ENCODE measurements at regions of chr6 and their contacts with region 1.

Region 1: DNA sequence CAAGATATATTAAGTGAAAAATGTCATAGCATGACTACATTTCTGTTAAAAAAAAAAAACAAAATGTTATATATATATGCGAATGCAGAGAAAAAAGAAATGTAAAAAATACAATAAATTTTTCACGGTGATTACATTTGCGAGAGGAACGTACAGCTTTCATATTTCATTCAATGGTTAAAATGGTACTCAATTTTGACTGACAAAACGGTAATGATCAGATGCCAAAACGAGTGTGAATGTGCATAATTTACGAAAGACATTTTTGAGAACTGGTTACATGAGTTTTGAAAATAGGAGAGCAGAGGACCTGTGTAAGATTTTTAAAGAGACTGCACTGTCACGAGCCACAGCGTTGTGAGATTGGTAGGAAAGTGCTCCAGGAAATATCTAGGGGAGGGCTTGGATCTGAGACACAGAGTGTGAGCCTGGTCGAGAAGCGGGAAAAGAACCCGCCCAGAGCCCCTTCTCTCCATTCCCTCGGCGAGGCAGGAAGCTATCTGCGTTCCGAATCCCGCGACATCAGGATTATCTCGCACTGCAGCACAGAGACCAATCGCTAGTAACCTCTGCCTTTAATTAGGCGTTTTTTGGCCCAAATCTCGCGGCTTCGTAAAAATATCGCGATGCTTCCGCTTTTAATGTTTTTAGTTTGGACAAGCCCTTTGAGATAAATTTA is 28.5 kb downstream of the TRIM27 start:
- DNase-seq: peak; percentile 98
- ATAC-seq: peak; percentile 62
- H3K4me3 ChIP-seq: peak overlapping the region; percentile 83
- H3K27ac ChIP-seq: peak overlapping the region; percentile 80
- H3K4me1 ChIP-seq: peaks cover 10% of the 10 kb centered on the region
- H3K27me3 ChIP-seq: no peaks in the 10 kb centered on the region
- CTCF ChIP-seq: no peak

Region 2: GRCh38 chr6:28863604-28864320 is 31.5 kb before region 1 on chr6:
- CTCF ChIA-PET with region 1: no interaction called
- POLR2A ChIA-PET with region 1: interaction called, 3 read pairs
- intact Hi-C with region 1: loop called (anchors 1 kb)
- DNase-seq: peak; percentile 91
- ATAC-seq: peak; percentile 61
- H3K4me3 ChIP-seq: peak overlapping the region; percentile 87
- H3K27ac ChIP-seq: peak overlapping the region; percentile 22; the same call in 1 of the 2 replicates
- H3K4me1 ChIP-seq: peaks cover 29% of the 10 kb centered on the region
- H3K27me3 ChIP-seq: no peaks in the 10 kb centered on the region
- CTCF ChIP-seq: no peak

Region 3: DNA sequence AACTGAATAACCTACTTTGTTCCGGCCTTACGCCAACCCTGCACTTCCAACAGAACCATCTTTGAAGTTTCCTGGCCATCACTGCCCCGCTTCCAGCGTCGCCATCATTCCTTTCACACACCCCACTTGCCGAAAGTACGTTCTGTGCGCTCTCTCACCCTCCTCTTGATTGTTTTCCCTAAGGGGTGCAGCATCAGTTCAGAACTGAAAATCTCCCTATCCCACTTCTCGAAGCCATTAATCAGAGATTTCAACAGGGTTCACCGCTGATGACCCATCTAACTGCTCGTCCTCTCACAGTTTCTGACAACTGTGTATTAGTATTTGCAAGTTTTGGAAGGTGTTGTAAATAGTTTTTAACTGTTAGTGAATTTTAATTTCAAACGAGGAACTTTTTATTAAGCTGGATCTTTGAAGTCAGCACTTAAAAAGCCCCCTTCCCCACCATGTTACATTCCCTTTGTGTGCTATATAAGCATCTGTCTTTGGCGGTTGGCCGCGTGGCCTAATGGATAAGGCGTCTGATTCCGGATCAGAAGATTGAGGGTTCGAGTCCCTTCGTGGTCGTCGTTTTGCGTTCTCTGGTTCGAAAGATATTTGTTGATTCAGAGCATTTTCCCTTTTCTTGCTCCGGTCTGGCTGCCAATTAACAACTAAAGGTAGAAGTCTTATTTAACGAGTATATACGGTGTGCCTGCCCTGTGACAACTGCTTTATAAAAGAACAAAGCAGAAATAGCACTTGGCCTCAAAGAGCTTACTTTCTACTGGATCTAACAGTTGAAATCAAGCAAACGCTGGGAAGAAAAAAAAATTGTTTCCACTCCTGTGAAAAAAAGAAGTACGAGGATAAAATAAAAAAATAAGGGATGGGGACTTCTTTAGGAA is 14.1 kb before region 1 on chr6:
- CTCF ChIA-PET with region 1: no interaction called
- POLR2A ChIA-PET with region 1: no interaction called
- intact Hi-C with region 1: loop called (anchors 2 kb)
- DNase-seq: peak; percentile 88
- ATAC-seq: peak; percentile 74
- H3K4me3 ChIP-seq: peak overlapping the region; percentile 81
- H3K27ac ChIP-seq: no peak overlapping the region
- H3K4me1 ChIP-seq: no peaks in the 10 kb centered on the region; the same call in 1 of the 2 replicates
- H3K27me3 ChIP-seq: no peaks in the 10 kb centered on the region
- CTCF ChIP-seq: no peak

Region 4: DNA sequence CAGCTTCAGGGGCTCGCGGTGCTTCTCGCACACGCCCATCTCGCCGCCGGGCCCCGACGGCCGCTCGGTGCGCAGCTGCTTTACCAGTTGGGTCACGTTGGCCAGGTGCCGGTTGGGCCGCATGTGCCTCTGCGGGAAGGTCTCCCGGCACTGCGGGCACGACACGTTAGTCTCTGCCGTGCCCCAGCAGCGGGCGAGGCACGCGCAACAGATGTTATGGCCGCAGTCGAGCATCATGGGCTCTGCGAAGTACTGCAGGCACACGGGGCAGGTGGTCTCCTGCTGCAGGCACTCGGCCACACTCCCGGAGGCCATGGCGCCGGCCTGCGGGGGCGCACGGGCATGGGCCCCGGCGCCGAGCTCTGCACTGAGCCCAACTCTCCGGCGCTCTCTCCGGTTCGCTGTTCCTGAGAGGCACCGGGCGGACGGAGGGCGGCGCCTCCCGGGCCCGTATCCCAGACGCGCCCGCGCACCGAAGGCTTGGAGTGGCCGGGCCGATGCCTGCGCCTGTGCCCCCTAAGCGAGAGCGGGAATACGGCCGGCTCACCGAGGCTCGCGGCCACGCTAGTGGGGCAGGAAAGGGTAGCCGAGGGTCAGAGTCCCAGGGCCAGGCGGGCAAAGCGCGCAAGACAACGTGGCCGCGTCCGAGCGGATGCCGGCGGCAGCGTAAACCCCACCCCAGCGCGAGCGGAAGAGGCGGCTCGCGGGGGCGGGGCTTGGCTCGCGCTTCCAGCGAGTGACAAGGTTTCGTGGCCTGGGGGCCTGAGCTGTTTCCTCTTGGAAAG is 28.2 kb after region 1 on chr6 and contains the start of gene TRIM27:
- CTCF ChIA-PET with region 1: no interaction called
- POLR2A ChIA-PET with region 1: interaction called, 40 read pairs
- intact Hi-C with region 1: loop called (anchors 1 kb)
- DNase-seq: peak; percentile 95
- ATAC-seq: peak; percentile 72
- H3K4me3 ChIP-seq: peak within 1 kb of the TSS; percentile 86
- H3K27ac ChIP-seq: peak within 1 kb of the TSS; percentile 82
- H3K4me1 ChIP-seq: peaks cover 23% of the 10 kb centered on the region
- H3K27me3 ChIP-seq: no peaks in the 10 kb centered on the region
- CTCF ChIP-seq: no peak
- total RNA-seq, gene TRIM27: 85.8 and 92.5 TPM in 2 replicates